ENCODE measurements at regions of chr13 and their contacts with region 1.

Region 1: GRCh38 chr13:49802426-49802825 is 9.9 kb upstream of the KPNA3 start:
- DNase-seq: no peak
- ATAC-seq: no peak
- H3K4me3 ChIP-seq: no peak overlapping the region
- H3K4me3 Mint-ChIP-seq: no peak overlapping the region
- H3K27ac ChIP-seq: no peak overlapping the region
- H3K27ac Mint-ChIP-seq: no peak overlapping the region
- H3K4me1 ChIP-seq: no peaks in the 10 kb centered on the region
- H3K4me1 Mint-ChIP-seq: no peaks in the 10 kb centered on the region
- H3K27me3 ChIP-seq: no peaks in the 10 kb centered on the region
- H3K27me3 Mint-ChIP-seq: peaks cover 14% of the 10 kb centered on the region
- CTCF ChIP-seq: no peak

Region 2: DNA sequence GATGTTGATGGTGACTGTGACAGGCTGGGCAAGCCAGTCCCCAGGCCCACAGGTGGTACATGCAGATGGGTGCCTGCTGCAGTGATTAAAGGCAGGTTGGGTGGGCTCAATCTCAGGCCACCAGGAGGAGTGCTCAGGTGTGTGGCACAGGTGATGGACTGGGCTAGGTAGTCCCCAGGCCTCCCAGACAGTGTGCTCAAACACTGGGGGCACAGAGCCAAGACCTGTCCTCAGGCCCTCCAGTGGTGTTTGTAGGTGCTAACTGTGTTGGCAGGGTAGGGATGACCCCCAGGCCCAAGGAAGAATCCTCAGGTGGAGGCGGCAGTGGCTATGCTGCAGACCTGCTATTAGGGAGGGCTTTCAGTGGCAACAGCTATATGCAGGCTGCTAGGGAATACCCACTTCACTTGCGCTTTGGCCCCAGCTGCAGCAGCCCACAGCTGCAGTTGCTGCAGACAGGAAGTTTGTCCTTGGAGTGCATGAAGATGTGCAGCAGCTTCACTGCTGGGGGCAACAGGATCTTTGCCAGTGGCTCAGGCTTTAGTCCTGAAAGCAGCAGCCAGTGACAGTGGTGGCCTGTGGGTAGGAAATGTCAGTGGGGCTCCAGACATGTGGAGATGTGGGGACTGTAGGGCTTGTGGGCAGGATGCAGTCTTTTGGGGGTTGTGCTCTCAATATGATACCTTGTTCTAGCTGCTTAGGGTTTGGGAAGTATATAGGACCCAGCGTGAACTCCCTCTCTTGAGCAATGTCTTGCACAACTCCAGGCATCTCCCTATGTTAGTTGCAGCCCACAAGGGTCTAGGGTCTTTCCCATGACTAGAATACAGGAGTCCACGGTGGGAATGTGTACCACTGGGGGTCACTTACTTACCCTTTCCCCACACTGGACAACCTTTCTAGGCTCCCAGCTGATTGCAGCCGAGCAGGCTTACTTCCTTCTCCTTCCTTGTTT is 636.4 kb before region 1 on chr13:
- CTCF ChIA-PET with region 1: no interaction called
- POLR2A ChIA-PET with region 1: no interaction called
- intact Hi-C with region 1: no loop called
- DNase-seq: no peak
- ATAC-seq: no peak
- H3K4me3 ChIP-seq: no peak overlapping the region
- H3K4me3 Mint-ChIP-seq: no peak overlapping the region
- H3K27ac ChIP-seq: no peak overlapping the region
- H3K27ac Mint-ChIP-seq: peak overlapping the region; percentile 22
- H3K4me1 ChIP-seq: no peaks in the 10 kb centered on the region
- H3K4me1 Mint-ChIP-seq: peaks cover 22% of the 10 kb centered on the region
- H3K27me3 ChIP-seq: no peaks in the 10 kb centered on the region
- H3K27me3 Mint-ChIP-seq: no peaks in the 10 kb centered on the region
- CTCF ChIP-seq: no peak

Region 3: GRCh38 chr13:49760558-49760957 is 41.9 kb before region 1 on chr13:
- CTCF ChIA-PET with region 1: no interaction called
- POLR2A ChIA-PET with region 1: no interaction called
- intact Hi-C with region 1: loop called in 1 of 2 experiments (anchors 5 kb)
- DNase-seq: peak in 1 of 9 experiments; percentile 3
- ATAC-seq: no peak
- H3K4me3 ChIP-seq: no peak overlapping the region
- H3K4me3 Mint-ChIP-seq: no peak overlapping the region
- H3K27ac ChIP-seq: no peak overlapping the region
- H3K27ac Mint-ChIP-seq: no peak overlapping the region
- H3K4me1 ChIP-seq: peaks cover 2% of the 10 kb centered on the region
- H3K4me1 Mint-ChIP-seq: peaks cover 46% of the 10 kb centered on the region
- H3K27me3 ChIP-seq: no peaks in the 10 kb centered on the region
- H3K27me3 Mint-ChIP-seq: no peaks in the 10 kb centered on the region
- CTCF ChIP-seq: no peak

Region 4: GRCh38 chr13:50485979-50486935 is 683.8 kb after region 1 on chr13:
- CTCF ChIA-PET with region 1: no interaction called
- POLR2A ChIA-PET with region 1: no interaction called
- intact Hi-C with region 1: no loop called
- DNase-seq: no peak
- ATAC-seq: no peak
- H3K4me3 ChIP-seq: no peak overlapping the region
- H3K4me3 Mint-ChIP-seq: no peak overlapping the region
- H3K27ac ChIP-seq: no peak overlapping the region
- H3K27ac Mint-ChIP-seq: no peak overlapping the region
- H3K4me1 ChIP-seq: no peaks in the 10 kb centered on the region
- H3K4me1 Mint-ChIP-seq: no peaks in the 10 kb centered on the region
- H3K27me3 ChIP-seq: no peaks in the 10 kb centered on the region
- H3K27me3 Mint-ChIP-seq: no peaks in the 10 kb centered on the region
- CTCF ChIP-seq: no peak